Calu3 (cell line): ENCODE measurements at regions of chr3 and their contacts with region 1.

Region 1: DNA sequence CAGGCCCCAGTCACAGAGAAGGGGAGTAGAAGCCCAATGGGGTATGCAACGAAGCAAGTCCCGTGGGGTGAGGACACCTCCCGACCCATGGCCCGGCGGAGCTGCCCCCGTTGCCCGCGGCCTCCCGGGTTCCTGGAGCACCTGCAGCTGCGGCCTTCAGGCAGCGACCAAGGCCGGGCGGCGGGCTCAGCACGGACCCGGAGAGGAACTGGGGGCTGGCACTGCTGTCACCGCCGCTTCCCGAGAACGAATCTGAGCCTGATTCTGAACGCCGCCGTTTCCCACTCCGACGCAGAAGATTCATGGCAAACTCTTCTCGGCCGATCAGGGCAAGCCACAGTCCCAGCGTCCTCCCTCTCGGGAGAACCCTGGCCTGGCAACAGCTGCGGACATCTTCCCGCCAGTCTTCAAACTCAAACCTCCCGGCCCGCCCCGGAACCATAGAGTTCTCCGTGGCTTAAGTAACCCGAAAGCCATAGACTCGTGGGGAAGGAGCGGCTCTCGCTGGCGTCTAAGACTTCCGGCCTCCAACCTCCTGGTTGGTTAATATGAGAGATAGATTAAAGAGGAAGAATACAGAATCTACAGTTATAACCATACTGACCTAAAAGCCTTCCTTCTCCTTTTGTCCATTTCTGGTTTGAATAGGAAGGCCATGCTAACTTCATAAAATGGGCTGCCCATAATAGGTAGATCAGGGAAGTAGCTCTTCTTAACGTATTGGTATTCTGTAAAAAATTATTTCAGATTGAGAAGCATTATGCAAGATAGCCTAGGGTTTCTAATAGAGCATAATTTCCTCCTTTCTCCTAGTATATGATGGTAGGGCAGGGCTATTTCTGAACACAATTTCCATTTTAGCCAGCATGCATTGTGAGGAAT is at the start of gene POLQ:
- DNase-seq: peak; percentile 87
- H3K4me3 Mint-ChIP-seq: peak within 1 kb of the TSS; percentile 83
- H3K27ac Mint-ChIP-seq: peak within 1 kb of the TSS; percentile 91
- H3K4me1 Mint-ChIP-seq: peaks cover 7% of the 10 kb centered on the region
- H3K27me3 Mint-ChIP-seq: no peaks in the 10 kb centered on the region
- CTCF ChIP-seq: no peak
- total RNA-seq, gene POLQ: 13.7 and 15.5 TPM in 2 replicates

Region 2: DNA sequence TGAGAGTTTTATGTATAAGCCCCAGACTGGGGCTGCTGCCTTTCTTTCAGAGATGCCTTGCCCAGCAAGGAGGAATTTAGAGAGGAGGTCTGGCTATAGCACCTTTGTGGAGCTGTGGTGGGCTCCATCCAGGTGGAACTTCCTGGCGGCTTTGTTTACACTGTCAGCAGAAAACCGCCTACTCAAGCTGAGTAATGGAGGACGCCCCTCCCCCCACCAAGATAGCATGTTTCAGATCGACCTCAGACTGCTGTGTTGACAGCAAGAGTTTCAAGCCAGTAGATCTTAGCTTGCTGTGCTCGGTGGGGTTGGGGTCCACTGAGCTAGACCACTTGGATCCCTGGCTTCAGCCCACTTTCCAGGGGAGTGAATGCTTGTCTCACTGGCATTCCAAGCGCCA is 482.2 kb before region 1 on chr3:
- CTCF ChIA-PET with region 1: no interaction called
- intact Hi-C with region 1: no loop called
- DNase-seq: no peak
- H3K4me3 Mint-ChIP-seq: no peak overlapping the region
- H3K27ac Mint-ChIP-seq: no peak overlapping the region
- H3K4me1 Mint-ChIP-seq: no peaks in the 10 kb centered on the region
- H3K27me3 Mint-ChIP-seq: no peaks in the 10 kb centered on the region
- CTCF ChIP-seq: no peak

Region 3: DNA sequence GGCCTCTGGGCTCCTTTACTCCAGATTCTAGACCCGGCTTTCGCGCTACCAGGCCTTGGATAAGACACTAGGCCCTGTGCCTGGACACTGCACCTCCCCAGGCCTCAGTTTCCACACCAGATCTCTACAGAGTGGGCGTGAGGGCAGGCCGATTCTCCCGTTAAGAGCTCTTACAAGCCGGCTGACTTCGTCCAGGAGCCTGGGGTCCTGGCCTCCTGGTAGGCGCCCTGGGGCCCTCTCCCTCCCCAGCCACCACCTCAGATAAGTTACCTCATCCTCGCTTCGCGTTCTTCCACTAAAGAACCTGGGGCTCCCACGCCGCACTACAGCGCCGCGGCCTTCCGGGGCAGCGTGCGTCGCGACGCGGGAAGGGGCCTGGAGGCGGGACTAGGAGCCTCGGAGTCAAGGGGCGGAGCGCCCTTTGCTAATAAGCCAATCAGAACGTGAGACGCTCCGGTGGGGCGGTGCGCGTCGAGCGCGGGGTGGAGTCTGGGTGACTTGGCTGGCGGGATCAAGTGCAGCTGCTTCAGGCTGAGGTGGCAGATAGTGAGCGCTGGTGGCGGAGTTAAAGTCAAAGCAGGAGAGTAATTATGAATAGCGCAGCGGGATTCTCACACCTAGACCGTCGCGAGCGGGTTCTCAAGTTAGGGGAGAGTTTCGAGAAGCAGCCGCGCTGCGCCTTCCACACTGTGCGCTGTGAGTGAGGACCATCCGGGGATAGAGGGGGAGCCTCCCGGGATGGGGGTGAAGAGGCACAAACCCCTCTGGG is 289.1 kb after region 1 on chr3 and contains the starts of genes EAF2 and IQCB1:
- CTCF ChIA-PET with region 1: no interaction called
- intact Hi-C with region 1: loop called (anchors 10 kb)
- DNase-seq: peak; percentile 94
- H3K4me3 Mint-ChIP-seq: peak within 1 kb of the TSS; percentile 86
- H3K27ac Mint-ChIP-seq: peak within 1 kb of the TSS; percentile 57
- H3K4me1 Mint-ChIP-seq: peaks cover 12% of the 10 kb centered on the region
- H3K27me3 Mint-ChIP-seq: no peaks in the 10 kb centered on the region
- CTCF ChIP-seq: no peak
- total RNA-seq, gene EAF2: 4.7 and 4.9 TPM in 2 replicates
- total RNA-seq, gene IQCB1: 25.0 and 26.7 TPM in 2 replicates

Region 4: GRCh38 chr3:122092460-122093165 is 546.8 kb after region 1 on chr3:
- CTCF ChIA-PET with region 1: interaction called, 3 read pairs
- intact Hi-C with region 1: loop called (anchors 1 kb)
- DNase-seq: peak; percentile 56
- H3K4me3 Mint-ChIP-seq: no peak overlapping the region
- H3K27ac Mint-ChIP-seq: no peak overlapping the region
- H3K4me1 Mint-ChIP-seq: peaks cover 11% of the 10 kb centered on the region
- H3K27me3 Mint-ChIP-seq: no peaks in the 10 kb centered on the region
- CTCF ChIP-seq: peak; percentile 39

Region 5: DNA sequence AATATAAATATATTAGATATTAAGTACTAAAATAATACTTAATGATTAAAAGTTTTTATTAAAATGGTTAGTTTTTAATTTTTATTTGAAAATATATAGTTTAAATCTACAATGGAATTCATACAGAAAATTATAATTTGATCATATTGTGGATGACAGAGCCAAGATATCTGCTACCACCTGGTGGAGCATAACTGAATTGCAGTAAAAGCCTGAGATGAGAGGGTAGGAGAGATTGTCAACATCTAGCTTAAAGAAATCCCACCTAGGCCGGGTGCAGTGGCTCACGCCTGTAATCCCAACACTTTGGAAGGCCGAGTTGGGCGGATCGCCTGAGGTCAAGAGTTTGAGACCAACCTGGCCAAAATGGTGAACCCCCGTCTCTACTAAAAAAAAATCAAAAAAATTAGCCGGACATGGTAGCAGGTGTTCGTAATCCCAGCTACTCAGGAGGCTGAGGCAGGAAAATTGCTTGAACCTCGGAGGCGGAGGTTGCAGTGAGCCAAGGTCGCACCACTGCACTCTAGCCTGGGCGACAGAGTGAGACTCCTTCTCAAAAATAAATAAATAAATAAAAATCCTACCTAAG is 754.2 kb after region 1 on chr3:
- CTCF ChIA-PET with region 1: no interaction called
- intact Hi-C with region 1: loop called (anchors 10 kb)
- DNase-seq: peak; percentile 38
- H3K4me3 Mint-ChIP-seq: no peak overlapping the region
- H3K27ac Mint-ChIP-seq: no peak overlapping the region
- H3K4me1 Mint-ChIP-seq: no peaks in the 10 kb centered on the region
- H3K27me3 Mint-ChIP-seq: no peaks in the 10 kb centered on the region
- CTCF ChIP-seq: peak; percentile 27